T-cell (primary cell): ENCODE measurements at regions of chr12 and their contacts with region 1.

Region 1: DNA sequence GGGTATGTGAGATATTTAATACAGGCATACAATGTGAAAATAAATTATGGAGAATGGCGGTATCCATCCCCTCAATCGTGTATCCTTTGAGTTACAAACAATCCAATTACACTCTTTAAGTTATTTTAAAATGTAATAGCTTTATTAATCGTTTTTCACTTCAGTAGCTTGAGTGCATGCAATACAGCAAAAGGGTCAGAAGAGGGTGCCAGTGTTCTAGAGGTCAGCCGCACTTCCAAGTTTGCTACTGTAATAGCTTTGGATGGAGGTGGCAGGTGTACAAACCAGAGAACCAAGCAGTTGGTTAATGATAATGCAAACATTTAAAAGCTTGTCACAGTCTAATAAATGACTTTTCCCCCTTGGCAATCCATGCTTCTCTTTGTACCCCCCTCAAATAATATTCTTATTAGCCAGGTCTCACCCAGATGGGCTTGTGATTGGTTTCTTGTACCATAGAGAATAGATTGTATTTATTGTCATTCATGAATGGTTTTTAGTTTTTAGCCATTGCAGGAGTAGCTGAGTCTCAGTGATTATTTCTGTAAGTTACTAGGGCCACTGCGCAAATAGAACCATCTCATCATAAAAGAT is 127.0 kb downstream of the ERC1 start:
- DNase-seq: peak; percentile 34 to 87 (median 62)
- ATAC-seq: peak in 3 of 4 experiments; percentile 41 to 73 (median 50)
- H3K4me3 ChIP-seq: no peak overlapping the region
- H3K4me3 Mint-ChIP-seq: no peak overlapping the region
- H3K27ac ChIP-seq: no peak overlapping the region
- H3K27ac Mint-ChIP-seq: no peak overlapping the region
- H3K4me1 ChIP-seq: peaks cover 4% of the 10 kb centered on the region in 2 experiments
- H3K4me1 Mint-ChIP-seq: peaks cover 11 to 19% (median 12%) of the 10 kb centered on the region in 3 donors
- H3K27me3 ChIP-seq: no peaks in the 10 kb centered on the region
- H3K27me3 Mint-ChIP-seq: no peaks in the 10 kb centered on the region

Region 2: DNA sequence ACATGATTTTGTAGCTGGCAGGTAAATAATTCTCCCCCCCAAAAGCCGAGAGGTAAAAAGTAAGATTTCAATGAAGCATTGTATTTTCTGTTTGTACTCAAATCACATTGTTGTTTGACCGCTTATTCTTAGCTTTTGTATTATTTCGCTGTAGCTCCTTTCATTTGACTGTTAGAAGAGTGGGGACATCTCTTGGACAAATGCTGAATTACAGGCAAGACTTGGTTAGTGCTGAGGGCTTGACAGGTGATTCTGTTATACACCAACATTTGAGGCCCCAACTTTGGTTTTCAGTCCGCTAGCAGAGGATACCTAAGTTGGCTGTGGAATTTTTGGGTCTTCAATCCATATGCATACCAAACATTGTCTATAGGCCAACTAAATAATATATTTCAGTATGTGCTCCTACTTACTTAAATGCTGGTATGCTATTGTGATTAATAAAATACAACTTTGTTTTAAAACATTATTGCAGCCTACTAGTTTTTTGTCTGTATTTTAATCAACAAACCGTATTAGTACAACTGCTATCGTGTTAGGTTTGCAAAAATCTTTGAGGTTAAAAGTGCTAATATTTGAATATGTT is 24.8 kb before region 1 on chr12:
- CTCF ChIA-PET with region 1: interaction called in 1 of 2 experiments, 11 read pairs
- POLR2A ChIA-PET with region 1: no interaction called
- DNase-seq: peak in 17 of 35 experiments; percentile 3 to 66 (median 19)
- ATAC-seq: peak in 3 of 4 experiments; percentile 44 to 69 (median 63)
- H3K4me3 ChIP-seq: no peak overlapping the region
- H3K4me3 Mint-ChIP-seq: no peak overlapping the region
- H3K27ac ChIP-seq: no peak overlapping the region
- H3K27ac Mint-ChIP-seq: no peak overlapping the region
- H3K4me1 ChIP-seq: no peaks in the 10 kb centered on the region
- H3K4me1 Mint-ChIP-seq: peaks cover 3 to 16% (median 12%) of the 10 kb centered on the region in 3 donors
- H3K27me3 ChIP-seq: no peaks in the 10 kb centered on the region
- H3K27me3 Mint-ChIP-seq: no peaks in the 10 kb centered on the region

Region 3: DNA sequence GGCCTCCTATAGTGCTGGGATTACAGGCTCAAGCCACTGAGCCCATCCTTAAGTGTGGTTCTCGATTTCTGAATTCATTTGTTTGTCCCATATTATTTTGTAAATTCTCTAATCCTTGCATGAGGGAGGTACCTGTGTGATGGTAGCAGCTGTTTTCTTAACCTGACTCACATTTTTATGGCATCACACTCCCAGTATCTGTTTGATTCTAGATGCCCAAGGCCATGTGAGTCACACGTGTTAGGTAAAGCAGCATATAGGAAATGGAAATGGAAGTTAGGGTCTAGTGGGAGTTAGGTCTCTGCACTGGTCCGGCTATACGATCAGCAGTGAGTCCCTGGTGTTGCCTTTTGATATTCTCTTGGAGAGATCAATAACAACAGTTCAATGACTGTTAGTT is 71.1 kb after region 1 on chr12:
- CTCF ChIA-PET with region 1: interaction called in 1 of 2 experiments, 10 read pairs
- POLR2A ChIA-PET with region 1: interaction called in 1 of 2 experiments, 3 read pairs
- DNase-seq: no peak
- ATAC-seq: no peak
- H3K4me3 ChIP-seq: no peak overlapping the region
- H3K4me3 Mint-ChIP-seq: no peak overlapping the region
- H3K27ac ChIP-seq: no peak overlapping the region
- H3K27ac Mint-ChIP-seq: no peak overlapping the region
- H3K4me1 ChIP-seq: no peaks in the 10 kb centered on the region
- H3K4me1 Mint-ChIP-seq: no peaks in the 10 kb centered on the region
- H3K27me3 ChIP-seq: no peaks in the 10 kb centered on the region
- H3K27me3 Mint-ChIP-seq: no peaks in the 10 kb centered on the region

Region 4: GRCh38 chr12:1205512-1206060 is 87.5 kb after region 1 on chr12:
- CTCF ChIA-PET with region 1: interaction called in 1 of 2 experiments, 15 read pairs
- POLR2A ChIA-PET with region 1: interaction called in 1 of 2 experiments, 11 read pairs
- DNase-seq: no peak
- ATAC-seq: no peak
- H3K4me3 ChIP-seq: no peak overlapping the region
- H3K4me3 Mint-ChIP-seq: peak overlapping the region in 1 of 3 donors; percentile 48
- H3K27ac ChIP-seq: no peak overlapping the region
- H3K27ac Mint-ChIP-seq: peak overlapping the region; percentile 68 to 72
- H3K4me1 ChIP-seq: peaks cover 0 to 21% of the 10 kb centered on the region in 2 experiments
- H3K4me1 Mint-ChIP-seq: peaks cover 12 to 24% (median 19%) of the 10 kb centered on the region in 3 donors
- H3K27me3 ChIP-seq: no peaks in the 10 kb centered on the region
- H3K27me3 Mint-ChIP-seq: no peaks in the 10 kb centered on the region

Region 5: DNA sequence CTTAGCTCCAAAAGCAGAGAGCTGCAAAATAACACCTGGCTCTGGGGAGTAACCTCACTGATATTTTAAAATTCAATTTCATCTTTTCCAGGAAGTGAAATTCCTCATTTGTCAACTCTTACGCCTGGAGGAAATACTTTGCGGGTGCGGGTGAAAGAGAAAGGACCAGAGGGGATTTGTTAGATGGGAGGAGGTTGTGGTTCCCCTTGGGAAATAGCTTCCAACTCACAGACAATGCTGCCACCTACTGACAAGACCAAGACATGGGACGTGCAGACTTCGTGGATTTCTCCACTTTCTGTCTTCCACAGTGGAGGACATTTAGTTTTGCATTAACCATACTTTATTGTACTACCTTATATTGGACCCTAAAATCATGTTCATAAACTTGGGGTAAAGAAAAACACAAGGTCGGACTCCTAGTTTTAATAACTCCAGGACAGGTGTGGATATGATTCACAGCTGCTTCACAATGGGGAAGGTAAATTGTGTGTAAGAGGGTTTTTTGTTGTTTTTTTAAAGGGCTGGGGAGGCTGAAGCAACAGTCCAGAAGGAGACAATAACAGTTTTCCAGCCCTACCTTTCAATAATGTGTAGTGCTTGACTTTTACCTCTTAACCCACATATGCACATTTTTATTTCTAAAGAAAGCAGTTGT is 465.5 kb after region 1 on chr12:
- CTCF ChIA-PET with region 1: interaction called, 29 to 195 read pairs
- POLR2A ChIA-PET with region 1: interaction called, 4 to 8 read pairs
- DNase-seq: peak in 32 of 35 experiments; percentile 24 to 87 (median 53)
- ATAC-seq: peak; percentile 68 to 79 (median 74)
- H3K4me3 ChIP-seq: no peak overlapping the region
- H3K4me3 Mint-ChIP-seq: peak overlapping the region in 1 of 3 donors; percentile 7
- H3K27ac ChIP-seq: no peak overlapping the region
- H3K27ac Mint-ChIP-seq: peak overlapping the region in 1 of 2 donors; percentile 48
- H3K4me1 ChIP-seq: peaks cover 0 to 9% of the 10 kb centered on the region in 2 experiments
- H3K4me1 Mint-ChIP-seq: peaks cover 25 to 26% (median 26%) of the 10 kb centered on the region in 3 donors
- H3K27me3 ChIP-seq: no peaks in the 10 kb centered on the region
- H3K27me3 Mint-ChIP-seq: no peaks in the 10 kb centered on the region

Region 6: GRCh38 chr12:1605129-1606020 is 487.3 kb after region 1 on chr12:
- CTCF ChIA-PET with region 1: interaction called, 25 to 75 read pairs
- POLR2A ChIA-PET with region 1: interaction called in 1 of 2 experiments, 3 read pairs
- DNase-seq: peak in 34 of 35 experiments; percentile 27 to 86 (median 48)
- ATAC-seq: peak; percentile 65 to 79 (median 67)
- H3K4me3 ChIP-seq: peak overlapping the region; percentile 40 to 58
- H3K4me3 Mint-ChIP-seq: peak overlapping the region; percentile 76 to 85 (median 79)
- H3K27ac ChIP-seq: no peak overlapping the region
- H3K27ac Mint-ChIP-seq: peak overlapping the region; percentile 23 to 64
- H3K4me1 ChIP-seq: peaks cover 8 to 28% of the 10 kb centered on the region in 2 experiments
- H3K4me1 Mint-ChIP-seq: peaks cover 33 to 43% (median 41%) of the 10 kb centered on the region in 3 donors
- H3K27me3 ChIP-seq: peaks cover 0 to 7% of the 10 kb centered on the region in 2 experiments
- H3K27me3 Mint-ChIP-seq: peaks cover 0 to 3% of the 10 kb centered on the region in 2 donors